ENCODE measurements at regions of chr4 and their contacts with region 1.

Region 1: GRCh38 chr4:52712172-52712990 is 38.8 kb downstream of the ERVMER34-1 start:
- DNase-seq: peak; percentile 97
- H3K4me3 Mint-ChIP-seq: peak overlapping the region; percentile 98
- H3K27ac Mint-ChIP-seq: peak overlapping the region; percentile 96
- H3K4me1 Mint-ChIP-seq: peaks cover 57% of the 10 kb centered on the region
- H3K27me3 Mint-ChIP-seq: no peaks in the 10 kb centered on the region

Region 2: GRCh38 chr4:52545099-52546069 is 167.0 kb before region 1 on chr4:
- intact Hi-C with region 1: loop called (anchors 5 kb)
- DNase-seq: peak; percentile 22
- H3K4me3 Mint-ChIP-seq: no peak overlapping the region
- H3K27ac Mint-ChIP-seq: no peak overlapping the region
- H3K4me1 Mint-ChIP-seq: no peaks in the 10 kb centered on the region
- H3K27me3 Mint-ChIP-seq: no peaks in the 10 kb centered on the region

Region 3: GRCh38 chr4:52659001-52659721 is 53.2 kb before region 1 on chr4 and contains the start of gene USP46:
- intact Hi-C with region 1: loop called (anchors 1 kb)
- DNase-seq: peak; percentile 30
- H3K4me3 Mint-ChIP-seq: peak within 1 kb of the TSS; percentile 86
- H3K27ac Mint-ChIP-seq: peak within 1 kb of the TSS; percentile 73
- H3K4me1 Mint-ChIP-seq: peaks cover 28% of the 10 kb centered on the region
- H3K27me3 Mint-ChIP-seq: peaks cover 14% of the 10 kb centered on the region
- total RNA-seq, gene USP46: 9.9 and 10.1 TPM in 2 replicates

Region 4: DNA sequence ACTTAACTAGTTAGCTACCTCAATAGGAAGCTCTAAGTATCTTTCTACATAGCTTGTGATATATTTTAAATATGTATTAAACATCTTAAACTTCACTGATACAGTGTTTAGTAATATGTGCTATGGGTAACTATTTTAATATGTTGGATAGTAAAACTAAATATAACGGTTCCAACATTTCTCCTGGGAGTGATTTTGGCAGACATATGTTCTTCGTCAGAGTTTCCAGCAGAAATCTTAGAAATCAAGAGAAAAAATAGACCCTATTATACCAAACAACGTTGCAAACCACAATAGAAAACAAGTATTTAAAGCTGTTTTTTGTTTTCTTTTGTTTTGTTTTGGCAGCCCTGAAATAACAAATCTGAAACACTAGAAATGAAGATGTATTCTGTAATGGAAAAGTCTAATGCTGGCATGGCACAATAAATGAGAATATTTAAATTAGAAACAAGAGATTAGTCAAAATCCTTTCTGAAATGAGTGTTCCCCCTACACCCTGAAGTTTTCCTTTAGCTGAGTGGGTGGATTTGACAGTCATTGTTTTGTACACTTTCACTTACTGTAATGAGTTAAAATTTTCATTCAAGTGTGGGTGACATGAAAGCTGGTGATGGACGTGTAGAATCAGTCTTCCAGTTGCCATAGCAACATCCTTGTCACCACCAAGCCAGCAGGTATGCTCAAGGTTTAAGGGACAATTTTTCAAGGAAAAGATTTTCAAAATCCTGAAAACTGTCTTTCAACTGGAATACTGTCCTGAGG is 419.9 kb after region 1 on chr4:
- intact Hi-C with region 1: loop called (anchors 1 kb)
- DNase-seq: no peak
- H3K4me3 Mint-ChIP-seq: no peak overlapping the region
- H3K27ac Mint-ChIP-seq: peak overlapping the region; percentile 79
- H3K4me1 Mint-ChIP-seq: peaks cover 31% of the 10 kb centered on the region
- H3K27me3 Mint-ChIP-seq: no peaks in the 10 kb centered on the region